Dendritic cell treated with granulocyte-macrophage colony-stimulating factor and Interleukin-4, amounts not matched to agents 40 ng/mL and 50 ng/mL, for 4 days (primary cell): ENCODE measurements at regions of chr20 and their contacts with region 1.

Region 1: DNA sequence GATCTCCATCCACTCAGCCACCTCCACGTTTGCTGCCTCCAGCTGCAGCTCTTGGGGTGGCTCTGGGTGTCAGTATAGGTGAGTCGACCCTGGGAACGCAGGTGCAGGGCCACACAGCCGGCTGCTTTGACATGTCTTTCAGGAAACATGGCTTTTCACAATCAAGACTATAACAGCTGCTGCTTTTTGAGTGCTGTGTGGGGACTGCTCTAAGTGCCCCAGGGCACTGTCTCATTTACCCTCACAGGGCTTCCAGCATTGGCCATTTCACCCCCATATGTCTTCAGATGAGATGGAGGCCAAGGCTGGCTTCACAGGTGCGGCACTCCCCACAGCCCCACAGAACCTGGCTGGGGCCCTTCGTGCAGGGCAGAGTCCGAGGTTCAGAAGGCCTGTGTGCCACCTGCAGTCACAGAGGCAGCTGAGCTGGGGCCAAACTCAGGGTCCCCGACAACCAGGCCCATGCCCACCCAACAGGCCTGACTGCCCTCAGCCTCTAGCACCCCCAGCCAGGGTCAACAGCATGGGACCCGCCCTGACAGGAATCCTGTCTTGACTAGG is 14.9 kb upstream of the CST7 start:
- H3K4me3 Mint-ChIP-seq: no peak overlapping the region
- H3K27ac Mint-ChIP-seq: peak overlapping the region; percentile 62
- H3K4me1 Mint-ChIP-seq: peaks cover 36% of the 10 kb centered on the region
- H3K27me3 Mint-ChIP-seq: no peaks in the 10 kb centered on the region

Region 2: GRCh38 chr20:24948939-24949679 is 14.9 kb after region 1 on chr20 and contains the start of gene CST7:
- intact Hi-C with region 1: loop called (anchors 2 kb)
- H3K4me3 Mint-ChIP-seq: peak within 1 kb of the TSS; percentile 63
- H3K27ac Mint-ChIP-seq: peak within 1 kb of the TSS; percentile 92
- H3K4me1 Mint-ChIP-seq: peaks cover 65% of the 10 kb centered on the region
- H3K27me3 Mint-ChIP-seq: peaks cover 5% of the 10 kb centered on the region

Region 3: GRCh38 chr20:25065625-25066338 is 131.6 kb after region 1 on chr20:
- intact Hi-C with region 1: loop called (anchors 5 kb)
- H3K4me3 Mint-ChIP-seq: no peak overlapping the region
- H3K27ac Mint-ChIP-seq: no peak overlapping the region
- H3K4me1 Mint-ChIP-seq: peaks cover 5% of the 10 kb centered on the region
- H3K27me3 Mint-ChIP-seq: peaks cover 40% of the 10 kb centered on the region

Region 4: GRCh38 chr20:25076731-25077609 is 142.8 kb after region 1 on chr20:
- intact Hi-C with region 1: no loop called
- H3K4me3 Mint-ChIP-seq: no peak overlapping the region
- H3K27ac Mint-ChIP-seq: no peak overlapping the region
- H3K4me1 Mint-ChIP-seq: peaks cover 7% of the 10 kb centered on the region
- H3K27me3 Mint-ChIP-seq: peaks cover 66% of the 10 kb centered on the region